Panc1 (cell line): ENCODE measurements at regions of chr5 and their contacts with region 1.

Region 1: DNA sequence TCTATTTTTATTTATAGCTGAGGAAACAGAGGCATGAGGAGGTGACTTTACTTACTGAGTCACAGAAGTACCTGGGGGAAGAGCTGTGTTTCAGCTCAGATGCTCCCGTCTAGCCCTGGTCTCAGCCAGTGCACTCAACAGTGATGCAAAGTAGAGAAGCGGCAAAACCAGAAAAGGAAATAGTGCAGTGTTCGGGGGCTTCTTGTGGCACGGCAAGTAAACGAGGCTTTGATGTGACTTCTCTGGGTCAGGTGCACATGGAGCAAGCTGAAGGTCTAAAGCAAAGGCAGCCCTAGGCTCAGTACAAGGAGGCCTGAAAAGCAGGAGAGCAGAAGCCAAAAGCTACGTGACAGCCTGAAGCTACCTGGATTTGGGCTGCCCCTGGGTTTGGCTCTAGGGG is 526.7 kb upstream of the ADAMTS16 start:
- DNase-seq: no peak
- ATAC-seq: no peak
- H3K4me3 ChIP-seq: no peak overlapping the region
- H3K27ac ChIP-seq: no peak overlapping the region
- H3K4me1 ChIP-seq: no peaks in the 10 kb centered on the region
- H3K27me3 ChIP-seq: no peaks in the 10 kb centered on the region
- CTCF ChIP-seq: no peak

Region 2: GRCh38 chr5:4411664-4412063 is 201.8 kb before region 1 on chr5:
- CTCF ChIA-PET with region 1: interaction called, 10 read pairs
- POLR2A ChIA-PET with region 1: no interaction called
- in situ Hi-C with region 1: no loop called
- intact Hi-C with region 1: no loop called
- DNase-seq: no peak
- ATAC-seq: no peak
- H3K4me3 ChIP-seq: no peak overlapping the region
- H3K27ac ChIP-seq: no peak overlapping the region
- H3K4me1 ChIP-seq: no peaks in the 10 kb centered on the region
- H3K27me3 ChIP-seq: no peaks in the 10 kb centered on the region
- CTCF ChIP-seq: no peak

Region 3: DNA sequence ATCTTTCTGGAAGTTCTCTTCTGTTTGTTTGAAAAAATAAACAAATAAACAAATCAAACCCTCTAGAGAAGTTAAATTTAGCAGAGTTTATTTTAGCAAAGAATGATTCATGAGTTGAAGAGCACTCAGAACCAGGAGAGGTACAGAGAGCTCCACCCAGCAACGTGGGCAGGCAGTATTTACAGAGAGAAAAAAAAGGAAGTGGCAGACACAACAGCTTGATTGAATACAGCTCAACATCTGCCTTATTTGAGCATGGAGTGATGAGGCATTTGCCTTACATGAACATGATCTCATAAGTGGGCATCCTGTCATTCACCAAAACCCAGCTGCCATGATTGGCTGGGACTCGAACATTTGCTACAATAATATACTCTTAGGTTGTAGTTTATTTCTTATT is 145.1 kb after region 1 on chr5:
- CTCF ChIA-PET with region 1: no interaction called
- POLR2A ChIA-PET with region 1: no interaction called
- in situ Hi-C with region 1: no loop called
- intact Hi-C with region 1: no loop called
- DNase-seq: no peak
- ATAC-seq: no peak
- H3K4me3 ChIP-seq: no peak overlapping the region
- H3K27ac ChIP-seq: no peak overlapping the region
- H3K4me1 ChIP-seq: no peaks in the 10 kb centered on the region
- H3K27me3 ChIP-seq: no peaks in the 10 kb centered on the region
- CTCF ChIP-seq: no peak